WTC11 (cell line): ENCODE measurements at regions of chr4 and their contacts with region 1.

Region 1: GRCh38 chr4:185183619-185184281 is 20.1 kb downstream of the CFAP97 start:
- DNase-seq: peak; percentile 72
- ATAC-seq: peak; percentile 78
- H3K4me3 Mint-ChIP-seq: no peak overlapping the region
- H3K27ac Mint-ChIP-seq: peak overlapping the region; percentile 83; the same call in 1 of the 2 replicates
- H3K4me1 Mint-ChIP-seq: peaks cover 30% of the 10 kb centered on the region
- H3K27me3 Mint-ChIP-seq: no peaks in the 10 kb centered on the region
- CTCF ChIP-seq: peak; percentile 41

Region 2: DNA sequence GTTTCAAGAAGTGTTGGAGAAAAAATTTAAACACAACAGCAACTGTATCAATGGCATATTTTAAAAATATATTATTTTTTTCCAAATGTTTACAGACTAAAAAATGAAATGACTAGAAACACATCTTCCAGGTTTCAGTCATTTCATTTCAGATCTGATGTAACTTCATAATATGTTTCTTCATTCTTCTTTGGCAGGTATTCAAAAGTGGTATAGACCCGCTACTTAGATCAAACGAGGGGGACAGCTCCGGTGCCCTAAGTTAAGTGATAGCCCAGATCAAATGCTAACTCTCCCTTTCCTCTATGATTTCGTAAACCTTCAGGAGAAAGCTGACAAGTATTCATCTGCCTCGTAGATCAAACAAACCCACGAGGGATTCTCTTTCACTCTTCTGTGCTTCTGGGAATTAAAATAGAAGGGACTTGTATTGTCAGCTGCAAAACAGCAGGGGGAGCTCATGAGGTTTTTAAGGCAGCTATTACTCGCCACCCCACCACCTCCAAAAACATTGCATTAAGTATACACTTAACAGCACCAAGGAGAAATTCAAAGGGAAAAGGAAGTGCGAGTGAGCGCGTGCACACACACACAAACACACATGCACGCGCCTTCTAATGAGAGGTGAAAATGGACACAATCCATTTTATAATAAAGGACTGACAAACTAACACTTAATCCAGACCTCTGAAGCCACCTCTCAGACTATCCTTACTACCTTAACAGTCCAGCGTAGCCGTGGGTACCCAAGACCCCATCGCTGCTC is 144.1 kb before region 1 on chr4:
- CTCF ChIA-PET with region 1: interaction called, 13 read pairs
- POLR2A ChIA-PET with region 1: no interaction called
- DNase-seq: no peak
- ATAC-seq: peak; percentile 84
- H3K4me3 Mint-ChIP-seq: no peak overlapping the region
- H3K27ac Mint-ChIP-seq: no peak overlapping the region
- H3K4me1 Mint-ChIP-seq: peaks cover 16% of the 10 kb centered on the region
- H3K27me3 Mint-ChIP-seq: peaks cover 8% of the 10 kb centered on the region
- CTCF ChIP-seq: peak; percentile 72

Region 3: DNA sequence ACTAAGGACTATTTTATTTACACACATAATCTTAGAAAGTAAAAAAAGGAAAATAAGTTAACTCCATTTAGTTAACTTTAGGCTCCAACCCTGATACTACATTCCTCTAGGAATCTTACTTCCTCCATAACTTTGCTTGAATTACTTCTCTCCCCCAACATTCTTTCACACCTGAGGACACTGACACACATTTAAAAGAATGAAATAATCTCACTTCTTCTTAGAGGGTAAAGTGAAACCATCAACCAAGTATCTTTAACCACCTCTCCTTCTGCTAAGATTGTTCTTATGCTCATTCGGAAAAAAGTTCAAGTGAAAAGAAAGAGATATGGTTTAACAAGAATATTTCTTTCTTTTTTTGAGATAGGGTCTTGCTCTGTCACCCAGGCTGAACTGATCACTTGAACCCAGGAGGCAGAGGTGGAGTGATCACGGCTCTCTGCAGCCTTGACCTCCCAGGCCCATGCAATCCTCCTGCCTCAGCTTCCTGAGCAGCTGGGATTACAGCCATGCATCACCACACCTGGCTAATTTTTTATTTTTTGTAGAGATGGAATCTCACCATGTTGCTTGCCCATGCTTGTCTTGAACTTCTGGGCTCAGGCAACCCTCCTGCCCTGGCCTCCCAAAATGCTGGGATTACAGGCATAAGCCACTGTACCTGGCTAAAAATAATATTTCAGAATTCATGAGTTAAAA is 12.2 kb before region 1 on chr4:
- CTCF ChIA-PET with region 1: interaction called, 11 read pairs
- POLR2A ChIA-PET with region 1: no interaction called
- DNase-seq: no peak
- ATAC-seq: no peak
- H3K4me3 Mint-ChIP-seq: no peak overlapping the region
- H3K27ac Mint-ChIP-seq: peak overlapping the region; percentile 23
- H3K4me1 Mint-ChIP-seq: peaks cover 14% of the 10 kb centered on the region
- H3K27me3 Mint-ChIP-seq: no peaks in the 10 kb centered on the region
- CTCF ChIP-seq: no peak

Region 4: GRCh38 chr4:185201983-185202962 is 18.5 kb after region 1 on chr4:
- CTCF ChIA-PET with region 1: interaction called, 21 read pairs
- POLR2A ChIA-PET with region 1: no interaction called
- DNase-seq: no peak
- ATAC-seq: peak; percentile 33
- H3K4me3 Mint-ChIP-seq: peak overlapping the region; percentile 93
- H3K27ac Mint-ChIP-seq: peak overlapping the region; percentile 69
- H3K4me1 Mint-ChIP-seq: peaks cover 32% of the 10 kb centered on the region
- H3K27me3 Mint-ChIP-seq: peaks cover 26% of the 10 kb centered on the region
- CTCF ChIP-seq: no peak

Region 5: DNA sequence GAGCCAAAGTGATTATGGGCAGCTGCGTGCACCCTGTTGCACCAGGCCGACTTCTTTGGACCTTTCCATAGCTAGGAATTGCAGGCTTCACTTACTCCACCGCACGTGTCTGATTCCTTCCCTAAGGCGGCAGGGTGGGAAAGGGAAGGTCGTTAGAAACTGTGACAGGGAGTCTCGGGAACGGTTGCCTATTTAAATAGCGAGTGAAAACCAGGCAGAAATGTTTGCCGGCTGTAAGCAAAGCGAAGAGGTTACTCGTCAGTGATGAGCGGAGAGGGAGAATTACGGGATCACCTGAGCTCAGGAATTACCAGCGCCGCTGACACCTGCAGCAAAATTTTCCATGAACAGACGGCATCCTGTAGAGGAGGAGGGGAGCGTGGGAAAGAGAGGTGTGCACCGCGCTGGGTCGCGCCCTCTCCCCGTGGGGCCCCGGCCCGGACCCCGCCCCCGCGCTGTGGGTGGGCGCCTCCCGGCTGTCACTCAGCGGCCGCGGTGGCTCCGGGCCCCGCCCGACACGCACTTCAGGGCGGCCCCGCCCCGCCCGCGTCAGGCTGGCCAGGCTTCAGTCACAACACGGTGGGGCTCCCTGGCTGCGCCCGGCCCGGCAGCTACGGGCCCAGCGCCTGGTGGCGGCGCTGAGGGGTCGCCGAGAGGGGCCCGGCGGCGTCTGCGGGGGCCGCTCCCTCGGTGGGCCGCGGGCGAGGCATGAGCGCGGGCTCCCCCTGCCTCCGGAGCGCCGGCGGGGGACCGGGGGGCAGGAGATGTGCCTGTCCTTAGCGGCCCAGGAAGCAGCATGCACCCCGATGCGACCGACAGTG is 25.5 kb after region 1 on chr4 and contains the start of gene SNX25:
- CTCF ChIA-PET with region 1: interaction called, 11 read pairs
- POLR2A ChIA-PET with region 1: no interaction called
- DNase-seq: peak; percentile 87
- ATAC-seq: peak; percentile 88
- H3K4me3 Mint-ChIP-seq: peak within 1 kb of the TSS; percentile 92
- H3K27ac Mint-ChIP-seq: peak within 1 kb of the TSS; percentile 84
- H3K4me1 Mint-ChIP-seq: peaks cover 39% of the 10 kb centered on the region
- H3K27me3 Mint-ChIP-seq: peaks cover 55% of the 10 kb centered on the region
- CTCF ChIP-seq: no peak
- total RNA-seq, gene SNX25: 16.9 to 20.9 TPM (median 19.1 TPM) in 3 replicates

Region 6: DNA sequence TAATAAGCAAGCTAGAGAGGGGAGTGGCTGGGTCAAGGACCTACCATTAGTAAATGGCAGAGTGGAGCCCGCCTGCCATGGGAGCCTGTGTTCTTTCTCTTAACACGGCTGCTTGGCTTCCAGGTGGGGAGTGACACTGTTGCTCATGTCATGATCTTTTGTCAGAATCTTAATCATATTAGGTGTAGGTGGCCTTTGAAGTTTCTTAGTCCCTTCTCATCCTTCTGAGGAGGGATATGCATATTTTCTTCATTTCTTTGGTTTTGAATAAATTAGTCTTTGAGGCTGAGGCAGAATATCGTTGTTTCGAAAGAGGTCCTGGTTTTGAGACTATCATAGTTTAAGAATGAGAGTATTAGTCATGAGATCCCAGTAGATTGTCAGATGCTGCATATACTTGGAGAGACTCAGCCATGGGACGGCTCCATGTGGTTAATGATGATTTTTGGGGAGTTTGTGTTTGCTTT is 54.5 kb after region 1 on chr4:
- CTCF ChIA-PET with region 1: no interaction called
- POLR2A ChIA-PET with region 1: no interaction called
- DNase-seq: no peak
- ATAC-seq: no peak
- H3K4me3 Mint-ChIP-seq: no peak overlapping the region
- H3K27ac Mint-ChIP-seq: no peak overlapping the region
- H3K4me1 Mint-ChIP-seq: peaks cover 13% of the 10 kb centered on the region
- H3K27me3 Mint-ChIP-seq: peaks cover 5% of the 10 kb centered on the region; the same call in 1 of the 2 replicates
- CTCF ChIP-seq: no peak

Region 7: DNA sequence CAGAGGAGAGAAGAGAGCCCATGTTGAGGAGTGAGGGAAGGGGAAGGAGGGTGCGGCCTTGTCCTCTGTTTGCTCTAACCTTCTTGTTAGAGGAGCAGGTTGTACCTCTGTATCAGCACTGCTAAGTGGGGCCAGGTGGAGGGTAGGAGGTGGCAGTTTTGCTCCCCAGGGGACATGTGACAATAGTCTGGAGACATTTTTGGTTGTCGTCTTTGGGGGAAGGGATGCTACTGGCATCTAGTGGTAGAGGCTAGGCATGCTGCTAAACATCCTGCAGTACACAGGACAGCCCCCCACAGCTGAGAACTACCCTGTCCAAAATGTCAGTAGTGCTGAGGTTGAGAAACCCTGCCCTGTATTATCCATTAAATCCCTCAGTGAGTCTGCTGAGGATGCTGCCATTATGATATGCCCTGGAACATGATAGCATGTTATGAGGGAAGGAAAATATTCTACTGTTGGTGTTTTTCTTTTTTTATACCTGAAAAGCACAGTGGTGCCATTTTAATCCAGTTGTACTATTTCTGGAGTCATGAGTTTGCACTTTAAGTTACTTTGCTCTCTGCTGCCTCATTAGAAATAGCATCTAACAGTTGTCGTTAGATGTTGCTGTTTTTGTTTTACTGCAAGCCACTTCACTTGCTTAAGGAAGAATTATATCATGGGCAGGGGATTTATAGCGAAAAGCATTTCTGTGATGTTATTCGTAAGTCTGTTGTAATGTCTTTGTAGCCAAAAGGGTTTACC is 121.4 kb after region 1 on chr4:
- CTCF ChIA-PET with region 1: interaction called, 16 read pairs
- POLR2A ChIA-PET with region 1: no interaction called
- DNase-seq: peak; percentile 49
- ATAC-seq: peak; percentile 82
- H3K4me3 Mint-ChIP-seq: no peak overlapping the region
- H3K27ac Mint-ChIP-seq: peak overlapping the region; percentile 79
- H3K4me1 Mint-ChIP-seq: peaks cover 37% of the 10 kb centered on the region
- H3K27me3 Mint-ChIP-seq: no peaks in the 10 kb centered on the region
- CTCF ChIP-seq: no peak